IMR-90 (cell line): ENCODE measurements at regions of chr15 and their contacts with region 1.

Region 1: DNA sequence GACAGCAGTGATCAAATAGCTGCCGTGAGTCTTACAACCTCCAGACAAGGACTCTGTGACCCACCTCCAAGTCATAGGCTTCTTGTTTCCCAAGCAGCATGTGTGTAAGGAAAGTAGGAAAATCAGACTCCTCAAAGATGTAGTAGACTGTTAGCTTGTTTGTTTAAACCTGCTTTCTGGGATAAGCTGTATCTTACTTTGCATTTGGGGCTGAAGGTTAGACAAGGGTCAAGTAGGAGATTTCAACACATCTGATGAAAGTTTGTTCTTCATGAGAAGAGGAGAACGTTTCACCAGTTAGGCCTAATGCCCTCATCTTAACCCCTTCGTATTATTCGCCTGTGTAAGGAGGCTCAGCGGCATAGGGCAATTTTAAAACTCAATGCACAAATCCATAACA is 756.4 kb upstream of the NR2F2 start:
- DNase-seq: no peak
- ATAC-seq: no peak
- H3K4me3 ChIP-seq: no peak overlapping the region
- H3K27ac ChIP-seq: no peak overlapping the region
- H3K4me1 ChIP-seq: no peaks in the 10 kb centered on the region
- H3K27me3 ChIP-seq: no peaks in the 10 kb centered on the region
- CTCF ChIP-seq: no peak
- POLR2A ChIP-seq: no peak
- RAD21 ChIP-seq: no peak

Region 2: DNA sequence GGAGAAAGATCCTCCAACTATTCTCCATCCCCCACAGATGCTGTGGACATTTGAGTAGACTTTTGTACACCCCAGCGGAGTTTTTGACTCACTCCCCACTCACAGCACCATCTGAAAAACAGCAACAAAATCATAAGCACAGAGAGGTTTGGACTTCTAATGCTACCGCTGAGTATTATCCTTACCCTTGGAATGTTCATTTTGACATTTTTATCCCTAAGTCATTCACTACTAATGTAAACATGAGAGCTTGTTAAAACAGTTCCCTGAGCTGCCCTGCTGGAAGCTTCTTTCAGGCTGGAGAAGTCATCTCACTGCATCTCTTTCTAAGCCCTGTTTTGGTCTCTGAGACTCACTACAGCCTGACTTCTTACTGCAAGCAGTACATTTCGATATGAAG is 296.8 kb before region 1 on chr15:
- CTCF ChIA-PET with region 1: interaction called, 12 read pairs
- POLR2A ChIA-PET with region 1: no interaction called
- dilution Hi-C with region 1: no loop called
- in situ Hi-C with region 1: no loop called
- intact Hi-C with region 1: no loop called
- DNase-seq: peak; percentile 98
- ATAC-seq: peak; percentile 87
- H3K4me3 ChIP-seq: no peak overlapping the region
- H3K27ac ChIP-seq: peak overlapping the region; percentile 86
- H3K4me1 ChIP-seq: peaks cover 16% of the 10 kb centered on the region
- H3K27me3 ChIP-seq: no peaks in the 10 kb centered on the region
- CTCF ChIP-seq: no peak
- POLR2A ChIP-seq: no peak
- RAD21 ChIP-seq: peak; percentile 21

Region 3: GRCh38 chr15:95559875-95560394 is 14.1 kb before region 1 on chr15:
- CTCF ChIA-PET with region 1: no interaction called
- POLR2A ChIA-PET with region 1: no interaction called
- dilution Hi-C with region 1: no loop called
- in situ Hi-C with region 1: no loop called
- intact Hi-C with region 1: no loop called
- DNase-seq: peak; percentile 97
- ATAC-seq: peak; percentile 74
- H3K4me3 ChIP-seq: no peak overlapping the region
- H3K27ac ChIP-seq: peak overlapping the region; percentile 3; the same call in 1 of the 2 replicates
- H3K4me1 ChIP-seq: peaks cover 13% of the 10 kb centered on the region
- H3K27me3 ChIP-seq: no peaks in the 10 kb centered on the region
- CTCF ChIP-seq: no peak
- POLR2A ChIP-seq: no peak
- RAD21 ChIP-seq: no peak; the same call in 1 of the 2 replicates

Region 4: DNA sequence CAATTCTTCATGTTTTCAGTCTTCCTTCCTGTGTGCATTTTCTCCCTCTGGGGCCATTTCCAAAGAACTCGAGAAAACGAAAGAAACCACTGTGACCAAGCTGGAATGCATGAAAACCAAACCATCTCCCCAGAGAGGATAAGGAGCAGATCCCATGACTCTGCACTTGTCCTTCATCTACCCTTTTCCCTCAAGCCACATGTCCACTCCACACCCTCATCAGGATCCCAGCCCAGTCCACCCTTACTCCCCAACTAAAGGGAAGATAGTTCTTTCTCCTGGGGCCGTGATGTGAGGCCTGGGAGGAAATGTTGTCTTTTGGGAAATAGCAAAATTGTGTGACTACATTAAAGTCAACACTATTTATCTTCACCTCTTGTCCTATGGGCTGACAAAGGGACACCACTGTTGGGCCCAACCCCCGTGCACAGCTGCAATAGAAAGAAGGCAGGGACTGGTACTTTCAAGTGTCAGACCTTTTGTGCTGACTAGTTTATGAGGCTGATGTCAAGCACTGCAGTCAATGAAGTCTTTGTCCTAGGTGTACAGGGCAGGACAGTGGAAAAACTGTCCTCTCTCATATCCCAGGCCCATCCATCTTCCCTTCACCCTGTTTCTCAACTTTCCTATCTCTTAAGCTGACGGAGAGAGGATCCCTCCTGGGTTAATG is 269.3 kb after region 1 on chr15:
- CTCF ChIA-PET with region 1: no interaction called
- POLR2A ChIA-PET with region 1: no interaction called
- dilution Hi-C with region 1: no loop called
- in situ Hi-C with region 1: no loop called
- intact Hi-C with region 1: no loop called
- DNase-seq: no peak
- ATAC-seq: no peak
- H3K4me3 ChIP-seq: no peak overlapping the region
- H3K27ac ChIP-seq: no peak overlapping the region
- H3K4me1 ChIP-seq: peaks cover 20% of the 10 kb centered on the region
- H3K27me3 ChIP-seq: no peaks in the 10 kb centered on the region
- CTCF ChIP-seq: no peak
- POLR2A ChIP-seq: no peak
- RAD21 ChIP-seq: no peak